HCT116 (cell line): ENCODE measurements at regions of chr10 and their contacts with region 1.

Region 1: DNA sequence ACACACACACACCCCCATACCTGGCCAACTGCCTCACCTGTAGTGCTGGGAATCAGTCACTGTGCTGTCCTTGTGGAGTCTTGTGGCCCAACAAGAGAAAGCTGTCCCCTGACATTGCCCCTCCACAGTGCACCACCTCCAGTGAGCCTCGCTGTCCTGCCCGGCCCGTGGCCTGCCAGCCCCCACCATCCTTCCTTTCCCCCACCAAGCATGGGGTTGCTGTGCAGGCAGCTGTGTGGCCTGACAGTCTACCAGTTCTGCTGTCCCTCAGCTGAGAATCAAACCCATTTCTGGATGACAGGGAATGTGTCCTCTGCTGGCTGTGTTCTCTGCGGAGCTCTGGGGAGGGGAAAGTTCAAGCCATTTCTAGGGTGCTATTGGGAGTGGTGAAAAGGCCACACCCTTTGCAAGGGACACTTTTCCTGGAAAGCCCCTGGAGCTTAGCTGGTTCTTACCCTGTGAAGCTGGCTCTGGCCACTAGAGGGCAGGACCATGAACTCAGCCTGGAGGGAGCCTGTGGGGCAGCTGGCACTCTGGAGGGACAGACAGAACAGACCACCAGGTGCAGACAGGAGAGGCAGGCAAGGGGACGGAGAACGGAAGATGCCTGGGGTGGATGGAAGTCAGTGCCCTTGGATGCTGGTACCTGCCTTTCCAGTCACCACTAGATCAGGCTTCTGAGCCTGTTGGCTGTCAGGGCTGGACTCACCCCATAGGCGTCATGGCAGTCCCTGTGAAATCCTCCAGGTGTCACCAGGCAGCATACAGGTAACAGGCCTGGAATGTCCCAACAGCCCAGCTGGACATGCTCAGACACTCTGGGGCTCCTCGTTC is 10.5 kb upstream of the MTPAP start:
- DNase-seq: peak; percentile 82
- ATAC-seq: peak; percentile 97
- H3K4me3 ChIP-seq: no peak overlapping the region; a peak in 1 of 4 replicates
- H3K27ac ChIP-seq: no peak overlapping the region
- H3K4me1 ChIP-seq: peaks cover 6 to 21% of the 10 kb centered on the region in 2 experiments; a peak in 3 of 4 replicates
- H3K27me3 ChIP-seq: no peaks in the 10 kb centered on the region
- CTCF ChIP-seq: peak; percentile 90 to 98 (median 95)
- POLR2A ChIP-seq: no peak
- RAD21 ChIP-seq: peak; percentile 69

Region 2: DNA sequence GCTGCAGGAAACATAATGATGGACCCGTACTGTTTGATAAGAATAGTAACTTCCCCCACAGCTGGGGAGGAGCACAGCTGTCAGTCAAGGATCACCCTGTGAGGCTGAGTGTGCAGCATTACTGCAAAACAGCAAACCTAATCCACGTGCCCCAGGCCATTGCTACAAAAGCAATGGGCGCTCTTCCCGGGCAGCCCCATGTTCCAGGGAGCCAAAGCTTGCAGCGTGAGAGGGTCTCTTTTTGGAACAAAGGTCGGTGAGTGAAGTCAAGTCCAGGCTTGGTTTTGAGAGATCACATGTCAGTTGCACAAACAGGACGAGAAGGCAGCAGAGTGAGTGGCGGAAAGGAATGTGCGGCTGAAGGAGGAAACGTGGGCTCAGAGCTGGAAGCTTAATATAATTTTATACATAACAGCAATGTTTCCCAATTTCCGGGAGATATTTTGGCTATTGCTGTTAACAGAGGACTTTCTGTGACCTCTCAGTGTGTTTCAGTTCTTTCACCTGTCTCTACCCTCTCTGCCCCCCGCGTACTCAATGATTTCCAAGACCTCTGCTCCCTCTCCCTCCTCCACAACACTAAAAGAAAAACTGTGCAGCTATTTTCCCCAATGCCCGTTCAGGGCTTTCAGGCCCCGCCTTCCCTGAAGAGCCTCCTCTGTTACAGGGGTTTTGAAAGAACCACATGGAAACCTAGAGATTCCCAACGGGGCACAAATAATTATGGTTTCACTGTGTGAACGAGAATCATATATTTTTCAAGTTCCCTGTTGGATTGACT is 139.4 kb before region 1 on chr10:
- CTCF ChIA-PET with region 1: no interaction called
- POLR2A ChIA-PET with region 1: no interaction called
- RAD21 ChIA-PET with region 1: no interaction called
- intact Hi-C with region 1: no loop called
- DNase-seq: no peak
- ATAC-seq: no peak
- H3K4me3 ChIP-seq: no peak overlapping the region
- H3K27ac ChIP-seq: no peak overlapping the region
- H3K4me1 ChIP-seq: no peaks in the 10 kb centered on the region
- H3K27me3 ChIP-seq: no peaks in the 10 kb centered on the region; the same call in 1 of the 2 replicates
- CTCF ChIP-seq: no peak
- POLR2A ChIP-seq: no peak
- RAD21 ChIP-seq: no peak

Region 3: DNA sequence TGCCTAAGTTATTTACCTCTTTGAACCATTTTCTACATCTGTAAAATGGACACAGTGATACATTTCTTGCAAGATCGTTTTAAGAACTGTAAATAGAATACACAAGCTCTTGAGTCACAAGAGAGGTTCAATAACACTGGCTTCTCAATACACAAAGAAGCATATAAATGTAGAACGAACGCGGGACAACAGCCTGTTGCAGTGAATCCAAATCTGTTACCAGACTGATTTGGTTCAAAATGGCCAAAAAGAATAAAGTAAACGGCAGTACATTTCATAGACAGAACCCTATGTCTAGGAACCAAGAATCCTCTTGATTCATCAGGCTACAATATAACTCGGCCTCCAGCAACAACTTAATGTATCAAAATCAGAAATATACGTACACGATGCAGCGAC is 11.2 kb before region 1 on chr10:
- CTCF ChIA-PET with region 1: interaction called, 20 read pairs
- POLR2A ChIA-PET with region 1: interaction called, 4 read pairs
- RAD21 ChIA-PET with region 1: interaction called in 1 of 2 experiments, 3 read pairs
- intact Hi-C with region 1: no loop called
- DNase-seq: no peak
- ATAC-seq: no peak
- H3K4me3 ChIP-seq: peak overlapping the region; percentile 64 to 99
- H3K27ac ChIP-seq: peak overlapping the region; percentile 83
- H3K4me1 ChIP-seq: peaks cover 0 to 20% of the 10 kb centered on the region in 2 experiments; a peak in 3 of 4 replicates
- H3K27me3 ChIP-seq: no peaks in the 10 kb centered on the region
- CTCF ChIP-seq: no peak
- POLR2A ChIP-seq: no peak
- RAD21 ChIP-seq: no peak

Region 4: GRCh38 chr10:30384701-30385201 is 25.2 kb after region 1 on chr10:
- CTCF ChIA-PET with region 1: interaction called, 20 read pairs
- POLR2A ChIA-PET with region 1: no interaction called
- RAD21 ChIA-PET with region 1: interaction called in 1 of 2 experiments, 5 read pairs
- intact Hi-C with region 1: loop called (anchors 1 kb)
- DNase-seq: peak; percentile 48
- ATAC-seq: peak; percentile 72
- H3K4me3 ChIP-seq: no peak overlapping the region
- H3K27ac ChIP-seq: no peak overlapping the region
- H3K4me1 ChIP-seq: peaks cover 17 to 31% of the 10 kb centered on the region in 2 experiments
- H3K27me3 ChIP-seq: no peaks in the 10 kb centered on the region
- CTCF ChIP-seq: peak; percentile 56 to 78 (median 68); a peak in 5 of 6 replicates
- POLR2A ChIP-seq: no peak
- RAD21 ChIP-seq: peak; percentile 62

Region 5: DNA sequence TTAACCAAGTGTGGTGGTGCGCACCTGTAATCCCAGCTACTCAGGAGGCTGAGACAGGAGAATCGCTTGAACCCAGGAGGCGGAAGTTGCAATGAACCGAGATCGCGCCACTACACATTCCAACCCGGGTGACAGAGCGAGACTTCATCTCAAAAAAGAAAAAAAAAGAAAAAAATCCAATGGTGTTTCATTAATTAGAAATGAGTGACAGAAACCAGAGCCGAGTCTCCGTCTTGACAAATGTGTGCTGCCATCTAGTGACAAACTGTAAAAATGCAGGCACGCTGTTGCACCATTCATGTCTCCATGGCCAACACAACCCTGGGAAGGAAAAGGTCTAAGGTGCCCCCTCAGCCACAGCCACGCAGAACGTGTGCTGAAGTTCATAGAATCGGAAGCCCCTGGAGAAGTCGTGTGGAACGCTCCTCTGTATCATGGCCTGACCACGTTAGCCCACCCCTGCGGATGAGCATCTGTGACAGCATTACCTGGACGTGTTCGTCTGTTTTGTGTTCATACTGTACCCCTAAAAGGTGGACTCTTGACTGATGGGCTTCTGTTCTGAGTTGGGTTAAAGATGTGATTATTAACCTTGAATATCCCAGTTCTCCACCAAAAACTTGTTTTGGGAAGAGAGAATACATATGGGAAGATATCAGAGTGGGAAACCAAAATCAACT is 175.0 kb after region 1 on chr10:
- CTCF ChIA-PET with region 1: interaction called, 5 read pairs
- POLR2A ChIA-PET with region 1: no interaction called
- RAD21 ChIA-PET with region 1: no interaction called
- intact Hi-C with region 1: loop called (anchors 1 kb)
- DNase-seq: peak; percentile 64
- ATAC-seq: peak; percentile 90
- H3K4me3 ChIP-seq: no peak overlapping the region
- H3K27ac ChIP-seq: no peak overlapping the region
- H3K4me1 ChIP-seq: peaks cover 0 to 14% of the 10 kb centered on the region in 2 experiments; a peak in 2 of 4 replicates
- H3K27me3 ChIP-seq: no peaks in the 10 kb centered on the region
- CTCF ChIP-seq: peak; percentile 73 to 85 (median 75)
- POLR2A ChIP-seq: no peak
- RAD21 ChIP-seq: peak; percentile 91

Region 6: GRCh38 chr10:30591249-30591670 is 231.7 kb after region 1 on chr10:
- CTCF ChIA-PET with region 1: interaction called, 46 read pairs
- POLR2A ChIA-PET with region 1: no interaction called
- RAD21 ChIA-PET with region 1: interaction called, 4 to 5 read pairs
- intact Hi-C with region 1: loop called (anchors 1 kb)
- DNase-seq: peak; percentile 37
- ATAC-seq: peak; percentile 97
- H3K4me3 ChIP-seq: no peak overlapping the region
- H3K27ac ChIP-seq: no peak overlapping the region
- H3K4me1 ChIP-seq: 0 out of 4 replicates have a peak, but pooled peaks cover 0 to 2% of the 10 kb centered on the region in 2 experiments
- H3K27me3 ChIP-seq: no peaks in the 10 kb centered on the region
- CTCF ChIP-seq: peak; percentile 69 to 76 (median 75)
- POLR2A ChIP-seq: no peak
- RAD21 ChIP-seq: peak; percentile 76